Mammary epithelial cell (primary cell): ENCODE measurements at regions of chr2 and their contacts with region 1.

Region 1: DNA sequence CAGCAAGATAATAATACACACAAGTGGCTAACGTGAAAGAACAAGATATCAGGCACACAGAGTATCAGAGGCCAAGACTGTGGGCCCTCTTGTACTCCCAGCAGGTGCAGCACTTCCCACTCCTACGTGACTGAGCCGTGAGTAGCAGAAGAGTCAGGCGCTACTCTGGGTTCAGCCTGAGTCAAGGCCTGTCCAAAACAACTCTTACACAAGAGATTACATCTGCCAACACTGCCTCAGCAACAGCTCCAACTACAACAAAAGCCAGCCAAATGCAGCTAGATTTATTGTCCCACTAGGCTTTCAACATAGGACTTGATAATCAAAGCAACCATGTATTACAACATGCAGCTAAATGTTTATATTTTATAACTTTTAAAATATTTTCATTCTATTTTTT is 56.2 kb downstream of the ITSN2 start:
- DNase-seq: peak; percentile 78
- H3K4me3 ChIP-seq: no peak overlapping the region
- H3K27ac ChIP-seq: no peak overlapping the region
- H3K4me1 ChIP-seq: no peaks in the 10 kb centered on the region
- H3K27me3 ChIP-seq: no peaks in the 10 kb centered on the region
- CTCF ChIP-seq: no peak

Region 2: DNA sequence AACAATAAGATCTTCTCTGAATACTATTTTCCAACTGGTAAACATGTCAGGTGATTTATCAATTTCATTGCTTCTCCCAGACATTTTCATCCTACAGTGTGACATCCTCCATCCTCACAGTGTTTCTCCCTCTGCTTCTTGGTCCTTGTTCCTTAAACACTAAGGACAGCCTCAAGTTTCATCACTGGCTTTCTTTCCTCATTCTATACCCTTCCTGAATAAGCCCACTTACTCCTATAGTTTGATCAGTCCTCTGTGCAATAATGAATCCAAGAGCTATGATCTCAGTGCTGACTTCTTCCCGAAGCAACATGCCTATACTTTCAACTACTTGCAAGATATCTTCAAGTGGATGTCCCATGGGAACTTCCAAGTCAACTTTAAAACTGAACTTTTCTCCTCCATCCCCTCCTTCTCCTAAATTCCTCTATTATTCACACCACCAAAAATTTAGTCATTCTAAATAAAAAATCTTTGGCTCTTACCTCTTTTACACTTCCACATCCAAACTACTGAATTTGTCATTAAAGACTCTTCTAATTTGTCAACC is 41.6 kb before region 1 on chr2:
- CTCF ChIA-PET with region 1: no interaction called
- dilution Hi-C with region 1: no loop called
- in situ Hi-C with region 1: no loop called
- intact Hi-C with region 1: loop called (anchors 5 kb)
- DNase-seq: no peak
- H3K4me3 ChIP-seq: no peak overlapping the region
- H3K27ac ChIP-seq: no peak overlapping the region
- H3K4me1 ChIP-seq: no peaks in the 10 kb centered on the region
- H3K27me3 ChIP-seq: no peaks in the 10 kb centered on the region
- CTCF ChIP-seq: no peak

Region 3: DNA sequence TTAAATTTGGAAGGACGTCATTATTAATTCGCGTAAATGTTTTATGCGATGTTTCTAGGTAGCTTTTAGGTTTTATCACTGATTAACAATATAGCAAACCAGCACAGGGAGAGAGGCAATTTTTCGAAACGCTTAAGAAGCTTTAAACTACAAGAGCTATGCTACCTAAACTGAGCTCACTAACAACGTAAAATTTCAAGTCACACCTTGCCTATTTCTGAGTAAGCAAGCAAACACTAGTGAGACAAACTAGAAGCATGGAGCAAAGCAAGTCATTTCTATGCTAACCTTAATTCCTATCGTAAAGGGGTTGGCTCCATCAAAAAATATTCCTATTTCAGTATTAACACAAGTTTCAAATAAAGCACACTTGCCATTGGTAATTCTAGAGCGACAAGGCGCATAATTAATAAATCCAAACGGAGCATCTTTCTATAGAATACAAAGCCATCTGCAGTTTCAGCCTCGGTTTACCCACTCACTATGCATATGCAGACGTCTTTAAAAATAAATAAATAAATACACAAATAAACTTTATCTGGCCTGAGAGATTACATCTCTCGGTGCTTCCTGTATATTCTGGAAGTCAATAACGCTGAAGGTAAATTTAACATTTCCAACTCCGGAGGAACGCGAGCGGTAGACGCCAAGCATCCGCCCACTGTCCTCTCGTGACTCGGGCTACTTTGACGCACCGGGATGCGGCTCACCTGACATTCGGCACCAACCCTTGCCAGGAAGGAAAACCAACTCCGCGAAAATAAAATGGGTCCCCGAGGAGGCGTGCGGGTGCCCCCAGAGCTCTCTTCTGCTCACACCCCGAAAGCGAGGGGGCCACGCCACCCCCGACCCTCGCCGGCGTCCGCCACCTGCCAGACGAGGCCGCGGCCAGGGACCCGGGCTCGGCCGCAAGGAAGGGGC is 55.3 kb after region 1 on chr2:
- CTCF ChIA-PET with region 1: no interaction called
- dilution Hi-C with region 1: no loop called
- in situ Hi-C with region 1: no loop called
- intact Hi-C with region 1: loop called (anchors 2 kb)
- DNase-seq: peak; percentile 60
- H3K4me3 ChIP-seq: peak overlapping the region; percentile 74 to 95 (median 94)
- H3K27ac ChIP-seq: peak overlapping the region; percentile 73
- H3K4me1 ChIP-seq: peaks cover 9% of the 10 kb centered on the region
- H3K27me3 ChIP-seq: no peaks in the 10 kb centered on the region
- CTCF ChIP-seq: no peak